Ovary (tissue), 10 donors: ENCODE measurements at regions of chr9 and their contacts with region 1.

Region 1: DNA sequence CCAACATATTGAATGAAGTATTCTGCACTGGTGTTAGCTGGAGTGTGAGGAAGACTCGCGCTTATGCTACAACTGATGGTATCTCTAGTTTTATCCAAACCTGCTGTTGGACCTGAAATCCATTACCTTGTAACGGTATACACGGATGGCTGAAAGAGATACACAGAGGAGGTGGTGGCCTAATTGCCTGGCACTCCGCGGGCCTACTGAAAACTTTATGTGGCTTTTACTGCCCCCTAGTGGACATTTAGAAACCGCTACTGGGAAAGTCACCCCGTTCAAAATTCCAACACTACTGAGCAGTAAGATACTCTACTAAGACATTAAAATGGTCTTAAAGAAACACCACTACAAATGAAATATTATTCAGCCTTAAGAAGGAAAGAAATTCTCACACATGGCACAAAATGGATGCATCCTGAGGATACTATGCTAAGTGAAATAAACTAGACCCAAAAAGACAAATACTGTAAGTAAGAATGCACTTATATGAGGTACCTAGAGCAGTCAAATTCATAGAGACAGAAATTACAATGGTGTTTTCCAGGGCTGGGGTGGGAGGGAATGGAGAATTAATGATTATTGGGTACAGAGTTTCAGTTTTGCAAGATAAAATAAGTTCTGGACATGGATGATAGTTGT is 100.4 kb downstream of the TTLL11 start:
- DNase-seq: peak; percentile 54 to 77 (median 66)
- H3K4me3 ChIP-seq: no peak overlapping the region
- H3K27ac ChIP-seq: no peak overlapping the region
- H3K4me1 ChIP-seq: peaks cover under 1% of the 10 kb centered on the region
- H3K27me3 ChIP-seq: no peaks in the 10 kb centered on the region
- CTCF ChIP-seq: peak; percentile 81 to 86 (median 84)
- EP300 ChIP-seq: no peak
- POLR2A ChIP-seq: no peak

Region 2: GRCh38 chr9:121634329-121635261 is 358.1 kb before region 1 on chr9:
- intact Hi-C with region 1: loop called in 1 of 4 experiments (anchors 5 kb)
- DNase-seq: peak in 2 of 5 donors; percentile 34 to 50
- H3K4me3 ChIP-seq: no peak overlapping the region
- H3K27ac ChIP-seq: no peak overlapping the region
- H3K4me1 ChIP-seq: peaks cover 5% of the 10 kb centered on the region
- H3K27me3 ChIP-seq: no peaks in the 10 kb centered on the region
- CTCF ChIP-seq: peak in 1 of 3 donors; percentile 49
- EP300 ChIP-seq: no peak
- POLR2A ChIP-seq: no peak

Region 3: DNA sequence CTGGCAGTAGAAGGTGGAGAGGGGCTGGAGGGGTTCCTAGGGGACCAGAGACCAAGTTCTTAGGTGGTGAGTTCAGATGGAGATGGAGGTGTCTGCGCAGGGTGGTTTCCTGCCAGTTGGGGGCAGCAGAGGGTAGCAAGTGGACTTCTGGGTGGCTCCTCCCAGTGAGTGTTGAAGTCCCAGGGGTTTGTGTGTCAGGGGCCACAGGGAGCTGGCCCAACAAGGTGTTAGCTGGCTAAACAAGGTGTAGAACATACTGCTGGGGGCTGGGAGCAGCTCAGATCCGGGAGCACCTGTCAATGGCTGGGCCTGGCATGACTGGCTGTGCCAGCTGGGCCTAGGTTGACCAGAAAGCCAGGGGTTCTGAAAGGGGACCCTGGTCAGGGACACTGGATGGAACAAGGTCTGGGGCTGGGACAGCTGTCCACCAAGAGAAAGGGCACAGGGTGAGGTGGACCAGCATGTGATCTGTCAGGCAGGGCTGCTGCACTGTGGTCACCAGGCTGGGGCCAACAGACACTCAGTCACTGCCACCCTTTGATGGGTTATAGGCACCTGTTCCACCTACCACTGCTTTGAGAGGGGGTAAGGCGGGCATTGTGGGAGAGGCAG is 305.7 kb before region 1 on chr9:
- intact Hi-C with region 1: loop called (anchors 2 to 5 kb)
- DNase-seq: peak; percentile 74 to 88 (median 87)
- H3K4me3 ChIP-seq: no peak overlapping the region
- H3K27ac ChIP-seq: peak overlapping the region in 1 of 2 donors; percentile 11
- H3K4me1 ChIP-seq: peaks cover 9% of the 10 kb centered on the region
- H3K27me3 ChIP-seq: no peaks in the 10 kb centered on the region
- CTCF ChIP-seq: peak; percentile 84 to 90 (median 89)
- EP300 ChIP-seq: no peak
- POLR2A ChIP-seq: no peak

Region 4: GRCh38 chr9:121765021-121765950 is 227.4 kb before region 1 on chr9:
- intact Hi-C with region 1: no loop called
- DNase-seq: peak; percentile 84 to 89 (median 86)
- H3K4me3 ChIP-seq: no peak overlapping the region
- H3K27ac ChIP-seq: peak overlapping the region; percentile 68 to 85
- H3K4me1 ChIP-seq: peaks cover 13% of the 10 kb centered on the region
- H3K27me3 ChIP-seq: no peaks in the 10 kb centered on the region
- CTCF ChIP-seq: peak in 1 of 3 donors; percentile 23
- EP300 ChIP-seq: no peak
- POLR2A ChIP-seq: no peak

Region 5: GRCh38 chr9:121839726-121840500 is 152.8 kb before region 1 on chr9:
- intact Hi-C with region 1: loop called in 1 of 4 experiments (anchors 10 kb)
- DNase-seq: peak in 1 of 5 donors; percentile 5
- H3K4me3 ChIP-seq: no peak overlapping the region
- H3K27ac ChIP-seq: no peak overlapping the region
- H3K4me1 ChIP-seq: peaks cover 14% of the 10 kb centered on the region
- H3K27me3 ChIP-seq: no peaks in the 10 kb centered on the region
- CTCF ChIP-seq: no peak
- EP300 ChIP-seq: no peak
- POLR2A ChIP-seq: no peak

Region 6: GRCh38 chr9:121852651-121853616 is 139.8 kb before region 1 on chr9:
- intact Hi-C with region 1: loop called in 1 of 4 experiments (anchors 10 kb)
- DNase-seq: peak; percentile 91 to 95 (median 94)
- H3K4me3 ChIP-seq: no peak overlapping the region
- H3K27ac ChIP-seq: peak overlapping the region; percentile 83 to 97
- H3K4me1 ChIP-seq: peaks cover 29% of the 10 kb centered on the region
- H3K27me3 ChIP-seq: no peaks in the 10 kb centered on the region
- CTCF ChIP-seq: no peak
- EP300 ChIP-seq: no peak
- POLR2A ChIP-seq: peak; percentile 34

Region 7: DNA sequence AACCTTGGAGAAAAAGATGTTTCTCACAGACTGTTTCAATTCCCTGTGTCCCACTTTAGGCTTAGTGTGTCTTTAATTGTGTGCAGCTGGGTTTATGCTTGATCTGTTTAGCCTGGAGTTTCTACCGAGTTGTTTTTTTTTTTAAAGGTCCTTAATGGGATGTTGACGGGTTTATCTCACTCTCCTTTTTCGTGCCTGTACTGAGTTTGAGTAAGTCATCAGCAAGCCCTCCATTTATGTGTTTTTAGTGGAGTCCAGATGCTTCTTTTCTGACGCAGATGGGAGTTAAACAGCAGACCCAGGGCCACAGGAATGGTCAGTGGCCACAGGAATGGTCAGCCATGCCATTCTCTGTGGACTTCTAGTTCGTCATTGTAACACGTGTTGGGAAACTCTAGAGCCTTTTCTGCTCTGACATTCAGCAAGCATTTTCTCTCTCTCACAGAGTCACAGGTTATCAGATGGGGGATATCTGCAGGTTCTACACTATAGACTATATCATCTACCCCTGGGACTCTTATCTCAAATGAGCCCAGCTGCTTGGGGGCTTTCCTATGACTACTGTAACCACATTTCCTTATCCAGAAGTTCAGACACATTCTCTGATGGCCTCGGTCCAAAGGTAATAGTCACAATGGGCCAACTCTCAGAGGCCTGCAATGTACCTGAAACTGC is 90.1 kb before region 1 on chr9:
- intact Hi-C with region 1: loop called in 1 of 4 experiments (anchors 10 kb)
- DNase-seq: peak in 1 of 5 donors; percentile 34
- H3K4me3 ChIP-seq: no peak overlapping the region
- H3K27ac ChIP-seq: peak overlapping the region; percentile 27 to 72
- H3K4me1 ChIP-seq: peaks cover 5% of the 10 kb centered on the region
- H3K27me3 ChIP-seq: no peaks in the 10 kb centered on the region
- CTCF ChIP-seq: no peak
- EP300 ChIP-seq: no peak
- POLR2A ChIP-seq: no peak

Region 8: DNA sequence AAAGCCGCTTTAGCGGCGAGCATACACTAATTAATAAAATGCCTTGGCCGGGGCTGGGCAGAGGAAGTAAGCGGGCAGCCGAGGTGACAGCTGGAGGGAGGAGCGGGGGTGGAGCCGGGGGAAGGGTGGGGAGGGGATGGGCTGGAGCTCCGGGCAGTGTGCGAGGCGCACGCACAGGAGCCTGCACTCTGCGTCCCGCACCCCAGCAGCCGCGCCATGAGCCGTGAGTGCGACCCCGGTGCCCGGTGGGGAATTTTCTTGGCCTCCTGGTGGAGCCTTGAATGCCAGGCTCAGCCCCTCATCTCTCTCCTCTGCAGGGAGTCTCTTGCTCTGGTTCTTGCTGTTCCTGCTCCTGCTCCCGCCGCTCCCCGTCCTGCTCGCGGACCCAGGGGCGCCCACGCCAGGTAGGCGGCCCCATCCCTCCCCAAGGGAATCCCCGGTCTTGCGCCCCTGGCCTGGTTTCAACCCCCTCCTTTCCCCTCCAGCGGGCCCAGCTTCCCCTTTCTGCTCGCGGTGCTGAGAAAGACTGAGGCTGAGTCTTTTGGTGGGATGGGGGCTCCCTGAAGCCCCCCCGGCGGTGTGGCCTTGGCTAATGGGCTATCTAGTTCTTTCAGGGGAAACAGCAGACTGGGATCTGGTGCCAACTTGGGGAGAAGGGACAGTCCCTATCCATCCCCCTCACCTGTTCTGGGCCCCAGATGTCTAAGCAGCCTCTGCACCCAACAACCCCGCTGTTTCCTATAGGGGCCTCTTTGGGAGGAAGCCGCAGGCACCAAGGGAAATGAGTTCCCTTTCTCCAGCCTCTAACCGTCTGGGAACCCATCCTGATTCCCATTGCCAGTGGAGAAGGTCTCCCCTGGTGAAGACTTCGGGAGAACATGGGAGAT is 378.4 kb after region 1 on chr9 and contains the start of gene PTGS1:
- intact Hi-C with region 1: no loop called
- DNase-seq: peak in 1 of 5 donors; percentile 35
- H3K4me3 ChIP-seq: peak within 1 kb of the TSS; percentile 23
- H3K27ac ChIP-seq: no peak within 1 kb of the TSS
- H3K4me1 ChIP-seq: peaks cover 12% of the 10 kb centered on the region
- H3K27me3 ChIP-seq: no peaks in the 10 kb centered on the region
- CTCF ChIP-seq: no peak
- EP300 ChIP-seq: no peak
- POLR2A ChIP-seq: no peak
- total RNA-seq, gene PTGS1: 1.4 to 37.1 (median 7.0) TPM